Ovary (tissue), 10 donors: ENCODE measurements at regions of chr4 and their contacts with region 1.

Region 1: DNA sequence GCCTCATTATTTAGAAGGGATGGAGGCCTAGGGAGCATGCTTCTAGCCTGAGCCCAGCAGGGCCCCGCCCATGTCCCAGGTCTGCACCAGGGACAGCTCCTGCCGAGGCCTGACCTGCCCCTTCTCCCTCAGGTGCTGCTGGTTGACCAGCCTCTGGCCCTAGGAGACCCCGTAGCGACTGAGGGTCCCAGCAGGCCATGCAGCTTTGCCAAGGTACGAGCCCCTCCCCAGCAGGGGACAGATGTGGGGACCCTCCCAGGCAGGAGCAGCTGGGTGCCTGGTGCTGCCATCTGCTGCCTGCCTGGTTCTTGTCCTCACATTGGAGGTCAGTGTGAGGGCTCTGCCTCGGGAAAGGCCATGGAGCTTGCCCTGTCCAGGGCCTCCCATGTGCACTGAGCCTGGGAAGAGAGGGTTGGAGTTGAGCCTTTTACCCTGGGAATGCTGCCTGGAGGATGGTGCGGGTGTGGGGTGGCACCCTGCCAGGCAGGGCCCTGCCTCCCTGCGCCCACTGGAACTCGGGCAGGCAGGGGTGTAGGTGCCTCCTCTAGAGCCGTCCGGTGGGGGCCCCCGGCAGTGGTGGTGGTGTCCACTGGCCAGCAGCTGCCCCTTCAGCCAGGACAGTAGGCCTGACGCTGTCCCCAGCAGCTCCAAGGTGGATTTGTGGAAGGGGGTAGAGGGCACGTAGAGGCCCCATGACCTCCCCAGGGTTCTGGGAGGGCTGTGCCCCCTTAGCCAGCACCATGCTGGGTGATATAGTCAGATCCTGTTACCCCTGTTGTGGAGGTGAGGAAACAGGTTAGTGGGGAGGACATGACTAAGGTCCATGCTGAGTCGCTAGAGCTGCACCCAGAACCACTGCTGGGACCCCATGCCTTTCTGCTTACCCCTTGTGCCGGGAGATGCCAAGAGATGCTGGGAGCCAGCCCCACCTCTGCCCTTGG is 2.2 kb upstream of the MSANTD1 start:
- DNase-seq: no peak
- H3K4me3 ChIP-seq: no peak overlapping the region
- H3K27ac ChIP-seq: no peak overlapping the region
- H3K4me1 ChIP-seq: peaks cover 5% of the 10 kb centered on the region
- H3K27me3 ChIP-seq: no peaks in the 10 kb centered on the region
- CTCF ChIP-seq: no peak
- EP300 ChIP-seq: no peak
- POLR2A ChIP-seq: no peak

Region 2: GRCh38 chr4:3276986-3277385 is 30.3 kb after region 1 on chr4:
- intact Hi-C with region 1: loop called in 1 of 4 experiments (anchors 1 kb)
- DNase-seq: no peak
- H3K4me3 ChIP-seq: no peak overlapping the region
- H3K27ac ChIP-seq: no peak overlapping the region
- H3K4me1 ChIP-seq: no peaks in the 10 kb centered on the region
- H3K27me3 ChIP-seq: no peaks in the 10 kb centered on the region
- CTCF ChIP-seq: no peak
- EP300 ChIP-seq: no peak
- POLR2A ChIP-seq: no peak